Activated CD8-positive, alpha-beta T cell treated with anti-CD3 and anti-CD28 coated beads for 36 hours (primary cell): ENCODE measurements at regions of chr3 and their contacts with region 1.

Region 1: GRCh38 chr3:196942226-196942914 is at the start of gene NCBP2:
- DNase-seq: peak; percentile 100
- ATAC-seq: peak; percentile 95
- H3K4me3 Mint-ChIP-seq: peak within 1 kb of the TSS; percentile 93
- H3K27ac Mint-ChIP-seq: peak within 1 kb of the TSS; percentile 98
- H3K4me1 Mint-ChIP-seq: peaks cover 47% of the 10 kb centered on the region
- H3K27me3 Mint-ChIP-seq: no peaks in the 10 kb centered on the region
- CTCF ChIP-seq: peak; percentile 64
- total RNA-seq, gene NCBP2: 107 to 111 TPM

Region 2: GRCh38 chr3:196837819-196838420 is 104.5 kb before region 1 on chr3:
- CTCF ChIA-PET with region 1: interaction called, 13 read pairs
- POLR2A ChIA-PET with region 1: interaction called, 4 read pairs
- intact Hi-C with region 1: loop called (anchors 10 kb)
- DNase-seq: peak; percentile 88
- ATAC-seq: peak; percentile 94
- H3K4me3 Mint-ChIP-seq: no peak overlapping the region
- H3K27ac Mint-ChIP-seq: no peak overlapping the region
- H3K4me1 Mint-ChIP-seq: no peaks in the 10 kb centered on the region
- H3K27me3 Mint-ChIP-seq: no peaks in the 10 kb centered on the region
- CTCF ChIP-seq: peak; percentile 88

Region 3: GRCh38 chr3:196867507-196868296 is 74.7 kb before region 1 on chr3 and contains the start of gene SENP5:
- CTCF ChIA-PET with region 1: interaction called, 12 read pairs
- POLR2A ChIA-PET with region 1: interaction called, 9 read pairs
- intact Hi-C with region 1: no loop called
- DNase-seq: peak; percentile 92
- ATAC-seq: peak; percentile 96
- H3K4me3 Mint-ChIP-seq: peak within 1 kb of the TSS; percentile 90
- H3K27ac Mint-ChIP-seq: peak within 1 kb of the TSS; percentile 93
- H3K4me1 Mint-ChIP-seq: peaks cover 25% of the 10 kb centered on the region
- H3K27me3 Mint-ChIP-seq: no peaks in the 10 kb centered on the region
- CTCF ChIP-seq: no peak
- total RNA-seq, gene SENP5: 28.0 to 32.5 TPM

Region 4: DNA sequence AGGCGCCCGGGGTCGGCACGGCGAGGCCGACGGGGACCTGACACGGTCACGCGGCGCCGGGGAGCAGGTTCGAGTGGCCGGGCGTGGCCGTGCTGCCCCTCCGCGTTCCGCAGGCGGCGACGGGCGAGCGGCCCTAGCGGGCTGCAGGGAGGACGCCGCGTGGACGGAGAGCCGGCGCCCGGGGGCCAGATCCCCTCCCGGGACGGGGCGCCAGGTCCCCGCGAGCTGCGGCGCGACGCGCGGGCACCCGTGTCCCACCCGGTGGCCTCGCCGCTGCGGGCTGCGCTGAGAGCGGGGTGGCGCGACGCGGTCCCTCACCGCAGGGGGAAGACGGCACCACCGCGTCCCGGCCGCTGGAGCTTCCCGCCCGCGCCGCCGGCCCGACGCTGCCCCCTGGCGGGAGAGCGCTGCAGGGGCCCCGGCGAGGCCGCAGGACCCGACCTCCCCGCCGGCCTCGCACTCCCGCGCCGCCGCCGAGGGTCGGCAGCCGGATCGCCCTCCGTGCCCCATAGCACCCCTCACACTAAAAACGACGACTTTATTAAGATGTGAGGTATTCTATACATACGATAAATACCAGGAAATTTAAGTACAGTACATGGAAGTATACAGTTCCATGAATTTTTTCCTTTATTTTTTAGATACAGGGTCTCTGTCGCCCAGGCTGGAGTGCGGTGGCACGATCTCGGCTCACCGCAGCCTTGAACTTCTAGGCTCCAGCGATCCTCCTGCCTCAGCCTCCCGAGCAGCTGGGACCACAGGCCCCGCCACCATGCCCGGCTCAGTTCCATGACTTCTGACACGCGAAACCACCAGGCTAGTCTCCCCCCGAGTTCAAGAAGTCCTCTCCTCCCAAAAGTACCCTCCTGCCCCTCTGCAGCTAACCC is 27.5 kb after region 1 on chr3:
- CTCF ChIA-PET with region 1: interaction called, 4 read pairs
- POLR2A ChIA-PET with region 1: interaction called, 14 read pairs
- intact Hi-C with region 1: no loop called
- DNase-seq: peak; percentile 67
- ATAC-seq: peak; percentile 78
- H3K4me3 Mint-ChIP-seq: peak overlapping the region; percentile 65
- H3K27ac Mint-ChIP-seq: peak overlapping the region; percentile 60
- H3K4me1 Mint-ChIP-seq: peaks cover 7% of the 10 kb centered on the region
- H3K27me3 Mint-ChIP-seq: peaks cover 13% of the 10 kb centered on the region
- CTCF ChIP-seq: peak; percentile 87